CD8-positive, alpha-beta memory T cell (primary cell): ENCODE measurements at regions of chr17 and their contacts with region 1.

Region 1: GRCh38 chr17:48024937-48025906 is 12.4 kb downstream of the COPZ2 start:
- DNase-seq: peak; percentile 93 to 99 (median 98)
- H3K4me3 ChIP-seq: peak overlapping the region; percentile 60
- H3K4me3 Mint-ChIP-seq: peak overlapping the region; percentile 81 to 96 (median 88)
- H3K27ac ChIP-seq: peak overlapping the region; percentile 49
- H3K27ac Mint-ChIP-seq: peak overlapping the region; percentile 56 to 97 (median 90)
- H3K4me1 ChIP-seq: peaks cover 36% of the 10 kb centered on the region
- H3K4me1 Mint-ChIP-seq: peaks cover 24 to 35% (median 27%) of the 10 kb centered on the region in 3 donors
- H3K27me3 ChIP-seq: peaks cover 10% of the 10 kb centered on the region
- H3K27me3 Mint-ChIP-seq: peaks cover 19 to 27% of the 10 kb centered on the region in 2 donors

Region 2: DNA sequence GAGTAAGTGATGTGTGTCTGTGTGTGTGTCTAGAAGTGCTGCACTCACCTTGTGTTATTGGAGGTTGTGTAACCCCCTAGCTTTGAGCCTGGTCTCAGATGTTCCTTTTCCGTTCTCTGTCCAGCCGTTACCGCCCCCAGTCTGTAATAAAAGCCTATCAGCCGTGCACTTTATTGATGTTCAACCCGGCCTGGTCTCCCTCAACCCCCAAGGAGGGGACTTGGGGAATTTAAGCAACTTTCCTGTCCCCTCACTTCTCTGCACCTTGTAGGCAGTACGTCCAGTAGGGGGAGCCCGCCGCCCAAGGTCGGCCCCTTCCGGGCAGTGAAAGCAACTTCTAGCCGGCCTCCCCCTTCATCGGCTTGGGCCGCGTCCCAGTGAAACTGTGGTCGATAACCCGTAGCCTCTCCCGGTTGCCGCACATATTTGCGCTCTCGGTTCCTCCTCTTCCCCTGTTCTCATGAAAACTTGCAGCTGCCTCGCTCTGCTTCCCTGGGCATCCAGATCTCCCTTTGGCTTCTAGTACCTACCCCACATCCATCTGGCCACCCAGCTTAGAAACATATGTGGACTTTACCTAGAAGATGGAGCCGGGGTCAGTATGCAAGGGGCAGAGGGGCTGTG is 76.0 kb before region 1 on chr17:
- CTCF ChIA-PET with region 1: interaction called, 10 read pairs
- POLR2A ChIA-PET with region 1: no interaction called
- DNase-seq: peak; percentile 60 to 85 (median 75)
- H3K4me3 ChIP-seq: peak overlapping the region; percentile 61
- H3K4me3 Mint-ChIP-seq: peak overlapping the region in 6 of 7 donors; percentile 68 to 88 (median 74)
- H3K27ac ChIP-seq: no peak overlapping the region
- H3K27ac Mint-ChIP-seq: peak overlapping the region; percentile 25 to 88 (median 73)
- H3K4me1 ChIP-seq: peaks cover 46% of the 10 kb centered on the region
- H3K4me1 Mint-ChIP-seq: peaks cover 32 to 42% (median 34%) of the 10 kb centered on the region in 3 donors
- H3K27me3 ChIP-seq: no peaks in the 10 kb centered on the region
- H3K27me3 Mint-ChIP-seq: no peaks in the 10 kb centered on the region

Region 3: GRCh38 chr17:47993031-47993564 is 32.1 kb before region 1 on chr17:
- CTCF ChIA-PET with region 1: no interaction called
- POLR2A ChIA-PET with region 1: no interaction called
- DNase-seq: no peak
- H3K4me3 ChIP-seq: no peak overlapping the region
- H3K4me3 Mint-ChIP-seq: no peak overlapping the region
- H3K27ac ChIP-seq: no peak overlapping the region
- H3K27ac Mint-ChIP-seq: no peak overlapping the region
- H3K4me1 ChIP-seq: no peaks in the 10 kb centered on the region
- H3K4me1 Mint-ChIP-seq: peaks cover 2 to 13% (median 10%) of the 10 kb centered on the region in 3 donors
- H3K27me3 ChIP-seq: no peaks in the 10 kb centered on the region
- H3K27me3 Mint-ChIP-seq: peaks cover 9 to 26% of the 10 kb centered on the region in 2 donors

Region 4: GRCh38 chr17:48037036-48037837 is 12.0 kb after region 1 on chr17 and contains the start of gene COPZ2:
- CTCF ChIA-PET with region 1: interaction called, 43 read pairs
- POLR2A ChIA-PET with region 1: interaction called, 3 read pairs
- DNase-seq: peak; percentile 50 to 78 (median 55)
- H3K4me3 ChIP-seq: peak within 1 kb of the TSS; percentile 66
- H3K4me3 Mint-ChIP-seq: peak within 1 kb of the TSS; percentile 83 to 96 (median 88)
- H3K27ac ChIP-seq: no peak within 1 kb of the TSS
- H3K27ac Mint-ChIP-seq: peak within 1 kb of the TSS in 4 of 8 donors; percentile 37 to 79 (median 60)
- H3K4me1 ChIP-seq: peaks cover 5% of the 10 kb centered on the region
- H3K4me1 Mint-ChIP-seq: peaks cover 4 to 15% (median 10%) of the 10 kb centered on the region in 3 donors
- H3K27me3 ChIP-seq: peaks cover 19% of the 10 kb centered on the region
- H3K27me3 Mint-ChIP-seq: peaks cover 33 to 37% of the 10 kb centered on the region in 2 donors
- total RNA-seq, gene COPZ2: 7.6 to 8.3 TPM

Region 5: DNA sequence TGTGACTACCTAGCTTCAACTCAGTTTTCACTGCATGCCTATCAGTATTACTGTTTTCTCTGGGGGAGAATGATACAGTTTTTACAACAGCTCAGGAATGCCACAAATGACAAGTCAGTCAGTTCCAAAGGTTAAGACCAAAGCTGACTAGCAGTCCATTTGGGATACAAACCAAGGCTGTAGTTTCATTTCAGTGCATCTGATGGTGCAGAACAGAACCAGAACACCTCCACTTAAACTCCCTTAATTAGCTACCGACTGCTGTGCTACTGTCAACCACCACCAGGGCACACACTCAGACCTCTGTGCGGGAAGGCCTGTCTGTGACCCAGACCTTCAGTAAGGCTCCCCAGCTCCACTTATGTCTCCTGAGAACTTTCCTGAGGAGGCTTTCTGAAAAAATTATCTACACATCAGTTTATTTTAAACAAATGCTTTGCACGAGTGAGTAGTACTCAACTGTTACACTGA is 43.3 kb after region 1 on chr17:
- CTCF ChIA-PET with region 1: interaction called, 45 read pairs
- POLR2A ChIA-PET with region 1: no interaction called
- DNase-seq: no peak
- H3K4me3 ChIP-seq: no peak overlapping the region
- H3K4me3 Mint-ChIP-seq: no peak overlapping the region
- H3K27ac ChIP-seq: no peak overlapping the region
- H3K27ac Mint-ChIP-seq: peak overlapping the region in 1 of 8 donors; percentile 33
- H3K4me1 ChIP-seq: no peaks in the 10 kb centered on the region
- H3K4me1 Mint-ChIP-seq: no peaks in the 10 kb centered on the region
- H3K27me3 ChIP-seq: no peaks in the 10 kb centered on the region
- H3K27me3 Mint-ChIP-seq: no peaks in the 10 kb centered on the region

Region 6: GRCh38 chr17:48131216-48131824 is 106.1 kb after region 1 on chr17:
- CTCF ChIA-PET with region 1: interaction called, 25 read pairs
- POLR2A ChIA-PET with region 1: no interaction called
- DNase-seq: peak; percentile 10 to 61 (median 35)
- H3K4me3 ChIP-seq: no peak overlapping the region
- H3K4me3 Mint-ChIP-seq: no peak overlapping the region
- H3K27ac ChIP-seq: no peak overlapping the region
- H3K27ac Mint-ChIP-seq: peak overlapping the region in 7 of 8 donors; percentile 10 to 86 (median 34)
- H3K4me1 ChIP-seq: no peaks in the 10 kb centered on the region
- H3K4me1 Mint-ChIP-seq: peaks cover 0 to 1% (median 0%) of the 10 kb centered on the region in 3 donors
- H3K27me3 ChIP-seq: no peaks in the 10 kb centered on the region
- H3K27me3 Mint-ChIP-seq: no peaks in the 10 kb centered on the region